ENCODE measurements at regions of chr19 and their contacts with region 1.

Region 1: DNA sequence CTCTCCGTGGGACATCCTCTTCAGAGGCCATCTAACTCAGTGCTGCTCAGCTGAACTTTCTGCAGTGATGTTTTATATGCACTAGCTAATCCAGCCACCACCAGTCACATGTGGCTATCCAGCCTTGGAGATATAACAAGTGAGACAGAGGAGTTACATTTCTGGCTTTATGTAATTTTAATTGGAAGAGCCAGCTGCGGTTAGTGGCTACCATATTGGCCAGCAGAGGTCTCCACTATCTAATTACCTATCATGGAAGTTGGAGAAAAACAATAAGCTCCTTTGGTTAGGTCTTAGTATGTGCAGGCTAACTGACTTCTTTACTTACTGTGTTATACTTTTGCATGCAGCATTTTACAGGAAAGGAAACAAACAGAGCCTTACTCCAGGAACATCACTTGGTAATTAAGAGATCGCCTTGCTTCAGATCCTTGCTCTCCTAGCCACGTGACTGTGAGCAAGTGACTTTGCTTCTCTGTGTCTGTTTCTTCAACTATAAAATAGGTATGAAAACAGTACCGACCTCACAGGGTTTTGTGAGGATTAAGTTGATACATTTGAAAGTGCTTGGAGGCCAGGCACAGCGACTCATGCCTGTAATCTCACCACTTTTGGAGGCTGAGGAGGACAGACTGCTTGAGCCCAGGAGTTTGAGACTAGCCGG is 1.6 kb upstream of the KLK10 start:
- DNase-seq: peak; percentile 56 to 77 (median 76)
- H3K4me3 ChIP-seq: no peak overlapping the region
- H3K27ac ChIP-seq: no peak overlapping the region
- H3K4me1 ChIP-seq: peaks cover 0 to 26% (median 10%) of the 10 kb centered on the region in 4 experiments
- H3K27me3 ChIP-seq: peaks cover 3 to 85% (median 27%) of the 10 kb centered on the region in 5 experiments

Region 2: DNA sequence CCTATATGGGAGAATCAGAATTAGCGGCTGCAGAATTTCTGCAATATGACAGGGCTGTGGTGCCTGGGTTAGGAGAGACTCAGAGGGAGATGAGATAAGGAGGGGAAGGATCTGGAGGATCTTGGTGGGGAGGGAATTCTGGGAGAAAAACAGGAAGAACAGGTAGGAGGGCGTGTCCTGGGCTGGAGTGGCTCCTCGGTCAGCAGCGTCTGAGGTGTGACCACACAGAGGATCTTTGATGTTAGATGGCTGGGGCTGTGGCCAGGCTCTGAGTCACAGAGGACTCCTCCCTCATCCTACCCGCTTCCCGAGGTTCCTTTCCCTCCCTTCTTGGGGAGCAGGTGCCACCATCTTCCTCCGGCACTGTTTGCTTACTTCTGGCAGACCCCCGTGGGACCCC is 45.4 kb before region 1 on chr19:
- CTCF ChIA-PET with region 1: no interaction called
- POLR2A ChIA-PET with region 1: no interaction called
- DNase-seq: no peak
- H3K4me3 ChIP-seq: no peak overlapping the region
- H3K27ac ChIP-seq: no peak overlapping the region
- H3K4me1 ChIP-seq: no peaks in the 10 kb centered on the region
- H3K27me3 ChIP-seq: peaks cover 0 to 56% (median 5%) of the 10 kb centered on the region in 5 experiments

Region 3: GRCh38 chr19:51005248-51005647 is 15.9 kb before region 1 on chr19:
- CTCF ChIA-PET with region 1: no interaction called
- POLR2A ChIA-PET with region 1: no interaction called
- DNase-seq: no peak
- H3K4me3 ChIP-seq: no peak overlapping the region
- H3K27ac ChIP-seq: no peak overlapping the region
- H3K4me1 ChIP-seq: no peaks in the 10 kb centered on the region
- H3K27me3 ChIP-seq: peaks cover 0 to 79% (median 14%) of the 10 kb centered on the region in 5 experiments

Region 4: DNA sequence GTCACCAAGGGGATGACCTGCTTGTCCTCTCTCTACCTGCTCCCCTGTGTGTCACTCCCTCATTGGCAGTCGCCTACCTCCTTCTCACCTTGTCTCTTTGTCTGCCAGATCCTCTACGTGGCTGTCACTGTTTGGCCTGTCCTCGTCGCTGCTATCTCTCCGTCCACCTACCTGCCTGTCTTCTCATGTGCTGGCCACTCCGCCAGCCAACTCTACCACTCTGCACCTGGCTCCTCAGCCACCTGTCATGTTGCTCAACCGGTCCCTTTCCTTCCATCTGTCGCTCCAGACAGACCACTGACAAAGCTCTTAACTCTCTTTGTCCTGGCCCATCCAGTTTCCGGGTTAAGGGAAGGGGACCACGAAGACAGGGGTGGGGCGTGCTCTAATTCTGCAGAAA is 13.6 kb after region 1 on chr19 and contains the start of gene KLK12:
- CTCF ChIA-PET with region 1: no interaction called
- POLR2A ChIA-PET with region 1: no interaction called
- DNase-seq: no peak
- H3K4me3 ChIP-seq: no peak within 1 kb of the TSS
- H3K27ac ChIP-seq: no peak within 1 kb of the TSS
- H3K4me1 ChIP-seq: no peaks in the 10 kb centered on the region
- H3K27me3 ChIP-seq: peaks cover 0 to 28% (median 0%) of the 10 kb centered on the region in 5 experiments

Region 5: DNA sequence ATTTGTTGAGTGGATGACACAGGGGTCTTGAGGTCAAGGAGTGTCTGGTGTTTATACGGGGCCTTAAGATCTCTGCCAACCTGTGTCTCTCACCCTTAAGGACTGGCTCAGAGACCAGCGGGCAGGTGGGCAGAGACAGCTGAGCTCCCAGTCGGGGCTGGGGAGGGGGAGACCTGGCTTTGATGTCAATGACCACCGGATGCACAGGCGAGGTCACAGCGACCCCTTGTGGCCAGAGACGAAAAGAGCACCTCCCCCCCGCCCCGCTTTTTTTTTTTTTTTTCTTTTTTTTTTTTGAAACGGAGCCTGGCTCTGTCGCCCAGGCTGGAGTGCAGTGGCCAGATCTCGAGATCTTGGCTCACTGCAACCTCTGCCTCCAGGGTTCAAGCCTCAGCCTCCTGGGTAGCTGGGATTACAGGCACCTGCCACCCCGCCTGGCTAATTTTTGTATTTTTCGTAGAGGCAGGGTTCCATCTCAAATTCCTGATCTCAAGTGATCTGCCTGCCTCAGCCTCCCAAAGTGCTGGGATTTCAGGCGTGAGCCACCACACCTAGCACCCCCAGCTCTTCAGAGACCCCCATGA is 73.7 kb after region 1 on chr19:
- CTCF ChIA-PET with region 1: interaction called, 15 read pairs
- POLR2A ChIA-PET with region 1: no interaction called
- DNase-seq: peak; percentile 21 to 44 (median 37)
- H3K4me3 ChIP-seq: no peak overlapping the region
- H3K27ac ChIP-seq: no peak overlapping the region
- H3K4me1 ChIP-seq: no peaks in the 10 kb centered on the region
- H3K27me3 ChIP-seq: no peaks in the 10 kb centered on the region